Activated CD4-positive, alpha-beta T cell treated with anti-CD3 and anti-CD28 coated beads for 36 hours (primary cell): ENCODE measurements at regions of chr1 and their contacts with region 1.

Region 1: DNA sequence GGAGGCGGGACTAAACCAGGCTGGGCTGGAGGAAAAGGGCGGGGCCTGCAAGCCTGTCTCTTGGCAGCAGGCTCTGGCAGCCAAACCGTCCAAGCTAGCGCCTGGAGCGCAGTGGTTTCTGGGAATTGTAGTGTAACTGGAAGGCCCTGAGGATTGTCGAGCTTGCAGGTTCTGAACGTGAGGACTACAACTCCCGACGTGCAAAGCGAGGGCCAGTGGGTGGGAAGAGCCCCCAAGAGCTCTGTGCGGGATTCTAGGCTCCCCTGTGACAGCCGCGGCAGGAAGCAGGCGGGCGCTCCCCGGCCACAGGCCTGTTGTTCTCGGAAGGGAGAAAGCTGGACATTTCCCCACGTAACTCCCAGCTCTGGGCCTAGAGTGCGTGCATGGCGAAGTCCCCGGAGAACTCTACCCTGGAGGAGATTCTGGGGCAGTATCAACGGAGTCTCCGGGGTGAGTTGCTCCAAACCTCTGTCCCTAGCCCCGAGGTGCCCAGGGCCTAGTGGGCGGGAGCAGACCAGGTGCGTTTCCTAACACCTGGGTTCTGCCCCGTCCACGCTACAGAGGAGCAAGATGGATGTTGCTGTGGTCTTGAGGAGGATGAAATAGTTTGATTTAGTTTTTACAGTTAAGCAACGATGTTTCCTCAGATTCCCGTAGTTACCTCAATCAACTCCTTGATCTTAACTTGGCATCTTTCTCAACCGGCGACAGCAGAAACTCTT is at the start of gene SDCCAG8:
- DNase-seq: peak; percentile 96
- ATAC-seq: peak; percentile 82
- H3K4me3 Mint-ChIP-seq: peak within 1 kb of the TSS; percentile 100
- H3K27ac Mint-ChIP-seq: peak within 1 kb of the TSS; percentile 97
- H3K4me1 Mint-ChIP-seq: peaks cover 27% of the 10 kb centered on the region
- H3K27me3 Mint-ChIP-seq: no peaks in the 10 kb centered on the region
- total RNA-seq, gene SDCCAG8: 26.4 to 26.5 TPM

Region 2: GRCh38 chr1:241519308-241520079 is 1736.5 kb before region 1 on chr1 and contains the start of gene FH:
- CTCF ChIA-PET with region 1: no interaction called
- POLR2A ChIA-PET with region 1: no interaction called
- intact Hi-C with region 1: loop called (anchors 10 kb)
- DNase-seq: peak; percentile 96
- ATAC-seq: peak; percentile 98
- H3K4me3 Mint-ChIP-seq: peak within 1 kb of the TSS; percentile 86
- H3K27ac Mint-ChIP-seq: peak within 1 kb of the TSS; percentile 87
- H3K4me1 Mint-ChIP-seq: peaks cover 21% of the 10 kb centered on the region
- H3K27me3 Mint-ChIP-seq: peaks cover 23% of the 10 kb centered on the region
- total RNA-seq, gene FH: 80.2 to 94.3 TPM

Region 3: DNA sequence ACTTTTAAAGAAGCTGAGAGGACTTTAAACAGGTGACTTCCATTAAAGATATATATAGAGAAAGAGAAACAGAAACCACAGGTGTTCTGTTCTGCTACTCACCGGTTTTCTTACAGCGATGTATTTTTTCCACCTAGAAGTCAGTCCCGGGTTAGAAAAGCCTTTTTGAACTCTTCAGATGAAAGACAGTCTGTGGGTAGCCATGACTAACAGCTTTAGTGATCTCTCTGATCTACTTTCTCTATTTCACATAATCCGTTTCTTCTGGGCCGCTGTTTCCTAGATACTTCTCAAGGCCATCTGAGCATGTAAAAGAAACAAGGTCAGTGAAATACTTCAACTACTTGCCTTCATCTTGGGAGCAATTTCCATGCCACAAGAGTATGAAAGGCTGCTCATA is 1578.8 kb before region 1 on chr1:
- CTCF ChIA-PET with region 1: no interaction called
- POLR2A ChIA-PET with region 1: no interaction called
- intact Hi-C with region 1: loop called in 1 of 2 experiments (anchors 10 kb)
- DNase-seq: peak; percentile 28
- ATAC-seq: peak; percentile 97
- H3K4me3 Mint-ChIP-seq: peak overlapping the region; percentile 28
- H3K27ac Mint-ChIP-seq: peak overlapping the region; percentile 35
- H3K4me1 Mint-ChIP-seq: peaks cover 27% of the 10 kb centered on the region
- H3K27me3 Mint-ChIP-seq: peaks cover 6% of the 10 kb centered on the region

Region 4: DNA sequence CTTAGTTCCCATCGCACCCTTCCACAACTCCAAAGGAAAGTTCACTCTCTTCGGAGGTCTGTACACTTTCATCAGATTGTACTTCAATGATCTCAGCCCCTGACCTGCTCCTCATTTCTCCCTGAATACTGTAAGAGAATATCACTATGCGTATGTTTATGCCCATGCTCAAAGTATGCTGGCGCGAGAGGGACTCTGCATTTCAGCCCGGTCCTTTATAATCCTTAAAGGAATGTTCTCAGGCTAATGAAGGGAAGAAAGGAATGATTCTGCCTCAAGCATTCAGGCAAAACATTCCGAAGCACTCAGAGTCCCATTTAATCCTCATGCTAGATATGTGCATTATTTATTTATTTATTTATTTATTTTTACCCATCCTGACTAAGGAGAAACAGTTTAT is 808.3 kb before region 1 on chr1:
- CTCF ChIA-PET with region 1: no interaction called
- POLR2A ChIA-PET with region 1: no interaction called
- intact Hi-C with region 1: no loop called
- DNase-seq: no peak
- ATAC-seq: no peak
- H3K4me3 Mint-ChIP-seq: no peak overlapping the region
- H3K27ac Mint-ChIP-seq: no peak overlapping the region
- H3K4me1 Mint-ChIP-seq: no peaks in the 10 kb centered on the region
- H3K27me3 Mint-ChIP-seq: peaks cover 23% of the 10 kb centered on the region

Region 5: DNA sequence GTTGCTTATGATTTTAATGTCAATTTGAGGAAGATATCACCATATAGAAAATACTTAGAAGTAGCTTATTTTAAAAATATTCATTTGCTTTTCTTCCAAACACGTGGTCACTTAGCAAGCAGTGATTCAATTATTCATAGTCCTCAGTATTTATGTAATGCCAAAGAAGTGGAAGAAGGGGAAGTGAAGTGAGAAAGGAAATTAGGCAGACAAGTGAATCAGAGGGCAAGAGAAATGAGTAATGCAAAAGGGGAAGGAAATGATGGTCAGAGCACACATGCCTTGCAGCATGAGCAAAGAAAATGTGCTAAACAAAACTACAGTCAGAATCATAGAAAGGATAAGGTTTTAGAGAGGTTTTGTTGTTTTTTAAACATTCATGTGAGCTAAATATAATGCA is 31.7 kb after region 1 on chr1:
- CTCF ChIA-PET with region 1: interaction called, 3 read pairs
- POLR2A ChIA-PET with region 1: no interaction called
- intact Hi-C with region 1: loop called (anchors 1 to 2 kb)
- DNase-seq: peak; percentile 8
- ATAC-seq: peak; percentile 90
- H3K4me3 Mint-ChIP-seq: no peak overlapping the region
- H3K27ac Mint-ChIP-seq: peak overlapping the region; percentile 91
- H3K4me1 Mint-ChIP-seq: peaks cover 34% of the 10 kb centered on the region
- H3K27me3 Mint-ChIP-seq: no peaks in the 10 kb centered on the region

Region 6: DNA sequence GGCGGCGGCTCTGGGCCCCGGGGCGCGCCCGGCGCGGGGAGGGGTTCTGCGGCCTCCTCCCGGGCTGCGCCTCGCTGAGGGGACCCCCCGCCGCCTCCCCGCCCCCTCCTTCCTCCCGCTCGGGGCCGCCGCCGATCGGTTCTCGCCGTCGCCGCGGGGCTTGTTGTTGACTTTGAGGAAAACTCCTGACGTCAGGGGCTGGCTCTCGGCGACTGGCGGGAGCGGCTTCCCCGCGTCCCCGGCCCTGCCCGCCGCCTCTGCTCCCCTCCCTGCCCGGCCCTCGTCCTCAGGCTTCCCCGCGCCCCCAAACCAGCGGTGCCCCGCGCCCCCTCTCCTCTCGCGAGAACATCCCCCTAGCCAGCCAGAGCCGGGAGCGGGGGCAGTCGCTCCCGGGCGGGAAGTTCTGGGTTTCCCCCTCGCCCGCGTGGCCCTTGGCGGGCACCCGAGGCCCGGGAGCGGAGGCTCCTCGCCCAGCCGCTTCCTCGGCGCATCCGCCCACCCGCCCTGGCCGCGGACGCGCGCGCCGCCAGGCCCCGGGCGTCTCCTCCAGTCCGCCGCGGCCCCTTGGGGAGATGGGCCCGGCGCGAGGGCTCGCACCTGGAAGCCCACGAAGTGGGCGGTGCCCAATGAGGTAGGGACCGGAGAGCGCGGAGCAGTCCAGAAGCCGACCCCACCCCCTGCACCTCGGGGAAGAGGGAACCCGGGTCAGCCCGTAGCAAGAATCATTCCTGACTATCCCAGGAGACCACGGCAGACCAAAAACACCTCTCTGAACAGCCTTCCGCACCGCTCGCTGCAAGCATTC is 594.7 kb after region 1 on chr1:
- CTCF ChIA-PET with region 1: no interaction called
- POLR2A ChIA-PET with region 1: no interaction called
- intact Hi-C with region 1: loop called (anchors 1 to 2 kb)
- DNase-seq: peak; percentile 92
- ATAC-seq: peak; percentile 50
- H3K4me3 Mint-ChIP-seq: peak overlapping the region; percentile 70
- H3K27ac Mint-ChIP-seq: peak overlapping the region; percentile 92
- H3K4me1 Mint-ChIP-seq: peaks cover 33% of the 10 kb centered on the region
- H3K27me3 Mint-ChIP-seq: peaks cover 2% of the 10 kb centered on the region

Region 7: DNA sequence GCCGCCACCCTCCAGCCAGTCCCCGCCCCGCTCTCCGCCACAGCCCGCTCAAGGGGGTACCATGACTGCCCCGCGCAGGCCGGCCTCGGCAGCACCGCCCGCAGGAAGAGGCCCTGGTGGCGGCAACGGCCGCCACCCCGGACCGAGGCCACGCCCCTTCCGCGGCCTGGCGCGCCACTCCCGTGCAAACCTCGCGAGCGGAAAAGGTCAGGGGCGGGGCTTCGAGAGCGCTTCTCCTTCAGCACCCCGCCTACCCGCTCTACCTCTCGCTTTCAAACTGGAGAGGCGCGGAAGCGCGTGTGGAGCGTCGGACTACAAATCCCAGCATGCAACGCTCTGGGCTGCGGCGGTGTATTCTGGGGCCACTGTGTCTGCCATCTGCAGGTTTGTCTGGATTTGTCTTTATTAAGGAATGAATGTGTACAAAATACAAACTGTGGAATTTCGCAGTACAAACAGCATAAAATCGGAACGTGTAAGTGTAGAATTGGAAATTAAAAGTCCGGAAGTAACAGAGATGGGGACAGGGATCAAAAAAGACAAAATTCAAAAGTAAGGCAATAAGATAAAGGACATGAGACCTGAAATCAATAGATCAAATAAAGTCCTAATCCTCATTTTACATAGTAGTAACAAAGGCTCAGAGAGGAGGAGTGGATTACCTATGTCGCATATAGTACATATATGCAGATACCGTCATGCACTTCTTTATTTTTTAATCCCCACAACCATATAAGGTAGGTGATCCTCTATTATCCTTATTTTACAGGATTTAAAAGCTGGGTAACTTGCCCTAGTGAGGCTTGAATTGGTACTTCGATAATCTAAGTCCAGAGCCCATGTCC is 1196.2 kb after region 1 on chr1:
- CTCF ChIA-PET with region 1: no interaction called
- POLR2A ChIA-PET with region 1: no interaction called
- intact Hi-C with region 1: loop called (anchors 1 to 5 kb)
- DNase-seq: peak; percentile 99
- ATAC-seq: peak; percentile 91
- H3K4me3 Mint-ChIP-seq: peak overlapping the region; percentile 97
- H3K27ac Mint-ChIP-seq: peak overlapping the region; percentile 97
- H3K4me1 Mint-ChIP-seq: peaks cover 40% of the 10 kb centered on the region
- H3K27me3 Mint-ChIP-seq: no peaks in the 10 kb centered on the region

Region 8: GRCh38 chr1:244864253-244865027 is 1608.5 kb after region 1 on chr1 and contains the start of gene HNRNPU:
- CTCF ChIA-PET with region 1: no interaction called
- POLR2A ChIA-PET with region 1: interaction called, 3 read pairs
- intact Hi-C with region 1: loop called (anchors 2 to 10 kb)
- DNase-seq: peak; percentile 98
- ATAC-seq: peak; percentile 72
- H3K4me3 Mint-ChIP-seq: peak within 1 kb of the TSS; percentile 100
- H3K27ac Mint-ChIP-seq: peak within 1 kb of the TSS; percentile 99
- H3K4me1 Mint-ChIP-seq: peaks cover 33% of the 10 kb centered on the region
- H3K27me3 Mint-ChIP-seq: no peaks in the 10 kb centered on the region
- total RNA-seq, gene HNRNPU: 521 to 532 TPM